Left cardiac atrium (tissue), 4 donors: ENCODE measurements at regions of chr2 and their contacts with region 1.

Region 1: DNA sequence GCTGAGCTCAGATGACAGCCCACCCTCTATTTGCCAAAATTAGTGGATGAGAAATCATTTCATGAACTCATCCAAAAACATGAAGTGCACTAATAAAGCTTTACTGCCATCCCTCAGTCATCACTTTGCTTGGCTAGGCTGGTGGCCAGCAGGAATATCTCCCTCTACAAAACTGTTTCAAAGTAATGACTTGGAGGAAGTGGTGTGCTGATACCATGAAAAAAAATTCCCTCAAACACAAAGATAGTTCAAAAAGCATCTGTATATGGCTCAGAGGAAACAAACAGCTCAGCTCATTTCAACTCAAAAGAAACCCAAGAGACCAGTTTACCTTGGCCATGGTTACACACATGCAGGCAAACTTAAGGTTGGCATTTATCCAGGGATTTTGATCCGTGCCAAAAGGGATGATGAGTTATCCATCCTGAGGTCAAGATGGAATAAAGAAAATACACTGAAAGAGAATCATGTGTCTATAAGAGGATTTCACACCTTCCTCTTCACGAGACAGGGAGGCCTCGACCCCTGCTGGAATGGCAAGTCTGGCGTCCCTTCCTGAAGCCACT is 18.4 kb upstream of the WIPF1 start:
- DNase-seq: peak; percentile 49
- ATAC-seq: peak; percentile 41 to 77

Region 2: GRCh38 chr2:174682578-174683391 is 66.8 kb after region 1 on chr2:
- intact Hi-C with region 1: loop called in 1 of 2 experiments (anchors 10 kb)
- DNase-seq: peak; percentile 83
- ATAC-seq: peak; percentile 88 to 95

Region 3: GRCh38 chr2:174711206-174711605 is 95.3 kb after region 1 on chr2:
- intact Hi-C with region 1: no loop called
- DNase-seq: no peak
- ATAC-seq: no peak

Region 4: GRCh38 chr2:175684457-175684856 is 1068.5 kb after region 1 on chr2:
- intact Hi-C with region 1: no loop called
- DNase-seq: no peak
- ATAC-seq: no peak